HAP-1 (cell line): ENCODE measurements at regions of chr22 and their contacts with region 1.

Region 1: DNA sequence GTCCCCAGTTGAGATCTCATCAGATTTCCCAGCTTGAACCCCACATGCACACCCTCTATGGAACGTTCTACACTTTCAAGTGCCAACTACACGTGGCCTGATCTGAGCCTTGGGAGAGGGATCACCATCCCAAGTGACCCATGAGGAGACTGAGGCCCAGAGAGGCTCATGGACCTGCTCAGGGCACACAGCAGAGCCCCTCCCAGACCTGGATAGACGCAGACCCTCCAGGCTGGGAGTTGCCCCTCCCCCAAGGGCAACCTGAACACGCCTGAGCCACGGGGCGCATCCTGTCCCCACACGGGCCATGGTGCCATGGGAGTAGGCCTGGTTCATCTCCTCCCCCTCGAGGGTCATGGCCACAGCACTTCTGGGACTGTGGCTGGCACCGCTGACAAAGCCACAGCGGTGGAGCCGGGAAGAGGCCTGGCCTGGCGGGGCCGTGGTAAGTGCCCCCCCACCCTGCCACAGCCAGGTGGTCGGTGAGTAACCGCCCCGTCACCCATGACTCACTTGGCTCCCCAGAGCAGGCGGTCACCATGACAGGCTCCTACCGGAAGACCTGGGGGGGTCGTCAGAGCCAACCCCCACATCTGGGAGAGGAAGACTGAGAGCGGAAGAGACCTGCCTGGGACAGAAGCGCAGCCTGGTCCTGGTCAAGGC is 8.1 kb downstream of the WNT7B start:
- DNase-seq: no peak
- H3K4me3 ChIP-seq: no peak overlapping the region
- H3K4me1 ChIP-seq: no peaks in the 10 kb centered on the region
- H3K27me3 ChIP-seq: peaks cover 38% of the 10 kb centered on the region

Region 2: GRCh38 chr22:45268958-45269844 is 699.7 kb before region 1 on chr22:
- in situ Hi-C with region 1: loop called (anchors 10 kb)
- DNase-seq: peak; percentile 58 to 88
- H3K4me3 ChIP-seq: peak overlapping the region; percentile 34
- H3K4me1 ChIP-seq: peaks cover 14% of the 10 kb centered on the region
- H3K27me3 ChIP-seq: no peaks in the 10 kb centered on the region

Region 3: GRCh38 chr22:45584121-45584570 is 384.7 kb before region 1 on chr22:
- in situ Hi-C with region 1: loop called (anchors 10 kb)
- DNase-seq: no peak
- H3K4me3 ChIP-seq: no peak overlapping the region
- H3K4me1 ChIP-seq: no peaks in the 10 kb centered on the region
- H3K27me3 ChIP-seq: no peaks in the 10 kb centered on the region

Region 4: GRCh38 chr22:45640291-45640940 is 328.5 kb before region 1 on chr22:
- in situ Hi-C with region 1: loop called (anchors 5 kb)
- DNase-seq: no peak
- H3K4me3 ChIP-seq: no peak overlapping the region
- H3K4me1 ChIP-seq: peaks cover 18% of the 10 kb centered on the region
- H3K27me3 ChIP-seq: no peaks in the 10 kb centered on the region

Region 5: GRCh38 chr22:45863981-45864751 is 104.7 kb before region 1 on chr22:
- in situ Hi-C with region 1: loop called (anchors 10 kb)
- DNase-seq: peak; percentile 62 to 90
- H3K4me3 ChIP-seq: no peak overlapping the region
- H3K4me1 ChIP-seq: no peaks in the 10 kb centered on the region
- H3K27me3 ChIP-seq: peaks cover 24% of the 10 kb centered on the region

Region 6: DNA sequence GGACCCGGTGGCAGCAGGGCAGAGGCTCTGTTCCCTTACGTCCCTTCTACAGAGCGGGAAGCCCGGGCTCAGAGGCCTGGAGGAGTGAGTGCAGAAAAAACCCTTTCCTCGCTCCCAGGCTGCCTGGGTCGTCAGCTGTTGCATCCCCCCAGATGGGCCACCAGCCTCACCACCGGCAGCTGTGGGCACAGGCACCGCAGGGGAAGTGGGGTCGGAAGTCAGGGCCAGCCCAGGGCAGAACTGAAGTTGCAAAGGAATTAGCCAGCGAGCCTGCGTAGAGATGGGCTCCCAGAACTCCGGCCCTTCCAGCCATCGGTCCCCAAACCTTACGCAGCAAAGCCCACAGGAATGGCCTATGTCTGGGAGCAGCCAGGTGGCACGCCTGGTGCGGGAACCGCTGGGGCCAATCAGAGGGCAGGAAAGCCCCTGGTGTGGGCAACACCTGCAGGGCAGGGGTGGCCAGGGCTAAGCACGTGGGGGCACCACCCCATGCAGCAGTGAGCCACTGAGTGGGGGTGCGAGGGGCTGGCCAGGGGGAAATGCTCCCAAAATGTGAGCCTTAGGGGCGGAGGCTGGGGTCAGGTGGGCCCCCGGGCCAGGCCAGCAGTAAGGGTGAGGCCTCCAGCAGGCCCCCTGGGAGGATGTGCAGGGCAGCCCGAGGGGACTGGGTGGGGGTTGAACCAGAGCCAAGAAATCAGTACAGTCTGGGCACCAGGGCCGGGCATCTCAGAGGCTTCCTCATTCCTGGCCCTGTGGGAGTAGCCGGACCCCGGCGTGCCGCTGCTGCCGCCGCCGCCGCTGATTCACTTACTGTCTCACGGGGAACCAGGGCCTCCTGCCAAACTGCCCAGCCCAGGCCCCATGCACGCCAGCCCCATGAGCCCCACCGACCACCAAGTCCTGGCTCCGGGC is 50.2 kb before region 1 on chr22:
- in situ Hi-C with region 1: no loop called
- DNase-seq: no peak
- H3K4me3 ChIP-seq: no peak overlapping the region
- H3K4me1 ChIP-seq: no peaks in the 10 kb centered on the region
- H3K27me3 ChIP-seq: no peaks in the 10 kb centered on the region